ENCODE measurements at regions of chr22 and their contacts with region 1.

Region 1: GRCh38 chr22:22576244-22576988 is 17.4 kb upstream of the PRAME start:
- DNase-seq: peak; percentile 32

Region 2: DNA sequence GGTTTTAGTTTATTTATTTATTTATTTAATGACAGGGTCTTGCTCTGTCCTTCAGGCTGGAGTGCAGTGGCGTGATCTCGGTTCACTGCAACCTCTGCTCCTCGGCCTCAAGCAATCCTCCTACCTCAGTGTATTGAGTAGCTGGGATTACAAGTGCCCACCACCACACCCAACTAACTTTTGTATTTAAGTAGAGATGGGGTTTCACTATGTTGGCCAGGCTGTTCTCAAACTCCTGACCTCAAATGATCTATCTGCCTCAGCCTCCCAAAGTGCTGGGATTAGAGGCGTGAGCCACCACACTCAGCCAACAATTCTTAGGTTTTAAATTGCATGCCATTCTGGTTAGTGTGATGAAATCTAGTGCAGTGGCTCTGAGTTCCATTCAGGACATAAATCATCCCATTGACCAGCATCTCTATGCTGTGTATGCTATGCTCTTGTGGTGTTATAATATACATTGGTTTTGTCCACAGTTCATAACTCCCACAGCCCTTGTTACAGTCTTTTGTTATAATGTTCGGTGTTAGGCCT is 96.3 kb before region 1 on chr22:
- in situ Hi-C with region 1: loop called (anchors 10 kb)
- DNase-seq: no peak